Activated naive CD4-positive, alpha-beta T cell treated with anti-CD3 and anti-CD28 coated beads for 36 hours (primary cell): ENCODE measurements at regions of chr1 and their contacts with region 1.

Region 1: DNA sequence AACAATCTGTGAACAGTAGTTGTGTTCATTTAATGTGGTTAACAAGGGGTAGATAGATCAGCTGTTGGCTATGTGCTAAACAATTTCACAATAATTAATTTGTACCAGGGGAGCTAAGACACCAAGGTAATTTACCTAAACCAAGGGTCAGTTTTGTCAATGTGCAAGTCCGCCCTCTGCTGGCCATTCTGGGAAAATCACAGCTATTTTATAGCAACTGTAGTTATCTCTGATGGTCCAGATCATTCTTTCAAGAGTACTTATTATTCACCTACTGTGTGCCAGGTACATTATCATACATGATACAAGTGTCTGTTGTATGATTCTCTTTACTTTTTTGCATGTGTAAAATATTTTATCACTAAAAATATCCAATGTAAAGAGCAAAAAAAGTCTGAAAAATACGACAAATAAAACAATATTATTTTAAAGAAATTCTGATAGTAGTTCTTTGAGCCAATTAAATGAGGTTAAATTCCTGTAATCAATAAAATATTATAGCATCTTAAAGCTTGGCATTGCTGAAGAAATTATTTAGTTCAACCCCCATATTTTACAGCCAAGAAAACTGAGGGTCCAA is 312.3 kb upstream of the FAM78B start:
- DNase-seq: peak; percentile 81
- H3K4me3 Mint-ChIP-seq: no peak overlapping the region
- H3K27ac Mint-ChIP-seq: no peak overlapping the region
- H3K4me1 Mint-ChIP-seq: no peaks in the 10 kb centered on the region
- H3K27me3 Mint-ChIP-seq: no peaks in the 10 kb centered on the region

Region 2: GRCh38 chr1:165717918-165718515 is 761.1 kb before region 1 on chr1:
- CTCF ChIA-PET with region 1: no interaction called
- intact Hi-C with region 1: loop called (anchors 5 kb)
- DNase-seq: peak; percentile 67
- H3K4me3 Mint-ChIP-seq: no peak overlapping the region
- H3K27ac Mint-ChIP-seq: no peak overlapping the region
- H3K4me1 Mint-ChIP-seq: no peaks in the 10 kb centered on the region
- H3K27me3 Mint-ChIP-seq: no peaks in the 10 kb centered on the region

Region 3: DNA sequence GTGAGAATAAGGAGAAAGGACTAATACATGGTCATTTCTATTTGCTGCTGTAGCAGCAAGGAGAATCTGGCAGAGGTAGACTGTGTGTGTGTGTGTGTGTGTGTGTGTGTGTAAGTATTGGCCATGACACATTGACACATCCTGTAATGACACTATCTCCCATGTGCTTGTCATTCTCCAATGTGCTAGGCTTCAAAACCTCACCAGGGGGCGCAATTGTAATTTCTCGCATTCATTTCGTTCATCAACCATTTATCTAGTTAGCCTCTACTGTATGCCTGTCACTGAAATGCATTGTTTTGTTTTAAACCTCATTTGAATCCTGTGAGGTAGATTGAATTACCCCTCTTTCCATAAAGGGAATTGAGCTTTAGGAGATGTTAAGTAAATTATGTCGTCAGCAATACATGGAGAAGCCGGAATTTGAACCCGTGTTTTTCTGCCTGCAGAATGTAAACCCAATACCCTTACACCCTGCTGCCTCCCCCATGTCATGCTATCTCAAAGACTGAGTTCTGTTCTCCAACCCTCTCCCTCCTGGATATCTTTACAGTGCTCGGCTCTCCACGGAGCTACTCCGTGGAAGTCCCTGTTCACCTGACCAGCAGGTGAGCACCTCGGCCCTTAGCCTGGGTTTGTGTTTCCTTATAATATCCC is 550.9 kb before region 1 on chr1:
- CTCF ChIA-PET with region 1: interaction called, 8 read pairs
- intact Hi-C with region 1: loop called (anchors 1 kb)
- DNase-seq: peak; percentile 75
- H3K4me3 Mint-ChIP-seq: no peak overlapping the region
- H3K27ac Mint-ChIP-seq: no peak overlapping the region
- H3K4me1 Mint-ChIP-seq: peaks cover 2% of the 10 kb centered on the region
- H3K27me3 Mint-ChIP-seq: peaks cover 23% of the 10 kb centered on the region

Region 4: DNA sequence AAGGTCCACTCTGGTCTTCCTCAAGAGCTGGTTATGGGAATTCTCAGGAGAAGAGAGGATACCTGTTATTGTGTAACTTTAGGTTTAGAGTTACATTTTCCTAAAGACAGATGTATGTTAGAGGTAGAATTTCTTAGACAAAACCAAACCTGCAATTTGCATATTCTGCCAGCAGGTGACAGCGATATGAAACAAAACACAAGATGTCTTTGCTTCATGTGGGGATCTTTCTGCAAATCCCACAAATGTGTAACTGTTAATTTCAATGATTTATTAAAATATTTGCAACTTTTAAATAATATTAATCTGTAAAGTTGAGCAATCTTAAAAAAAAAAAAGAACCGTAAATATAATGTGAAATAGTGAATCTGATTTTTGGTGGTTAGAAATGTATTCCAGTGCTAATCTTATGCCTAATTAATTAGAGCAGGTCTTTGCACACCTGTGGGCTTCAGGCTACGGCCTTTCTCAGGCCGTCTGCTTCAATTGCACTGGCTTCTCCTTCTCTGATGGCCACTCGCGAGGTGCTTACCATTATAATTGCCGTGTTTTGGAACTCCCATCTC is 345.8 kb before region 1 on chr1:
- CTCF ChIA-PET with region 1: interaction called, 7 read pairs
- intact Hi-C with region 1: loop called (anchors 1 kb)
- DNase-seq: peak; percentile 40
- H3K4me3 Mint-ChIP-seq: no peak overlapping the region
- H3K27ac Mint-ChIP-seq: no peak overlapping the region
- H3K4me1 Mint-ChIP-seq: no peaks in the 10 kb centered on the region
- H3K27me3 Mint-ChIP-seq: peaks cover 16% of the 10 kb centered on the region

Region 5: GRCh38 chr1:166638137-166638536 is 159.0 kb after region 1 on chr1:
- CTCF ChIA-PET with region 1: no interaction called
- intact Hi-C with region 1: no loop called
- DNase-seq: no peak
- H3K4me3 Mint-ChIP-seq: no peak overlapping the region
- H3K27ac Mint-ChIP-seq: no peak overlapping the region
- H3K4me1 Mint-ChIP-seq: no peaks in the 10 kb centered on the region
- H3K27me3 Mint-ChIP-seq: peaks cover 31% of the 10 kb centered on the region

Region 6: GRCh38 chr1:167790117-167790516 is 1311.0 kb after region 1 on chr1:
- CTCF ChIA-PET with region 1: no interaction called
- intact Hi-C with region 1: no loop called
- DNase-seq: no peak
- H3K4me3 Mint-ChIP-seq: no peak overlapping the region
- H3K27ac Mint-ChIP-seq: no peak overlapping the region
- H3K4me1 Mint-ChIP-seq: peaks cover 10% of the 10 kb centered on the region
- H3K27me3 Mint-ChIP-seq: no peaks in the 10 kb centered on the region